Heart right ventricle (tissue), 16 donors: ENCODE measurements at regions of chr13 and their contacts with region 1.

Region 1: GRCh38 chr13:26460648-26461047 is 96.8 kb upstream of the WASF3 start:
- DNase-seq: peak; percentile 79 to 91
- ATAC-seq: peak; percentile 84 to 92 (median 88)
- H3K4me3 ChIP-seq: no peak overlapping the region
- H3K27ac ChIP-seq: peak overlapping the region in 8 of 10 donors; percentile 56 to 90 (median 76)
- H3K4me1 ChIP-seq: peaks cover 0 to 47% (median 0%) of the 10 kb centered on the region in 9 donors
- H3K27me3 ChIP-seq: no peaks in the 10 kb centered on the region
- CTCF ChIP-seq: no peak

Region 2: DNA sequence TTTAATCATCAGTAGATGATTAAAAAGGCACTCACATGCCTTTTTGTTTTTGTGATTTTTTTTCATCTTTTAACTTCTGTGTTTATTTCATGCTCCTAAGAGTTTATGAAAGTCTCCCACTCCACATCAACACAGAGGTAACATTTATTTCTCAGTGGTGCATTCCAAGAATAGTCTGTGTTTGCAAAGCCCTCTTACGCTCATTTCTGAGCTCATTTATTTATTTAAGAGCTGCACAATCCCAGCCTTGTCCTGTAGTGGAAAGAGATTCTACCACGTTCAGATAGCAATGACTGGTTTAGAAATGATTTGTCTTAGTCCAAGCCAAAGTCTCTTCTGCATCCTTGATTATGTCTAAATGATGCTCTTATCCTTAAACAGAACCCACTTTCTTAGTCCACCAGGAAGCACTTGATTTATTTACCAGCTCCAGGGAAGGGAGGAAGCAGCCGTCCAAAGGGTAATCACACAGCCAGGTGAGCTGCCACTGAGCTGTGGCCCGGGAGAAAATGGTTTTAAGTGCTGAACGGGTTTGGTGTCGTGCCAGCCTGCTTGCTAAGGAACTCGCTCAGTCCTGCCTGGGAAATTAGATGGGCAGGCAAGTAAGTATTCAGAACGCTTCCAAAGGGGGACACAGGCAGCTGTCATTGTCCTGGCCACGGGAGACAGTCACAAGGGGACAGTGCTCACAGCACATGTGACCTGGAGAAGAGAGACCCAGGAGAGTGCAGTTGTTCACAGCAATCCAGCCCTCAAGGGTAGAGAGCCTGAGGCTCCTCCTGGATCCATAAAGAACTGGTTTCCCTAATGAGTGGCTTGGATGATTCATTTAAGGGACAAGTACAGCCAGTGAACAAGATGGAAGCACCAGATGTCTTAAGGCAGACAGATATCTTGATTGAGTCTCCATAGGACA is 34.9 kb before region 1 on chr13:
- intact Hi-C with region 1: loop called in 1 of 10 experiments (anchors 2 kb)
- DNase-seq: peak in 1 of 2 donors; percentile 8
- ATAC-seq: peak in 7 of 8 donors; percentile 11 to 74 (median 67)
- H3K4me3 ChIP-seq: no peak overlapping the region
- H3K27ac ChIP-seq: peak overlapping the region in 6 of 10 donors; percentile 26 to 85 (median 66)
- H3K4me1 ChIP-seq: peaks cover 0 to 32% (median 6%) of the 10 kb centered on the region in 9 donors
- H3K27me3 ChIP-seq: peaks cover 0 to 6% (median 0%) of the 10 kb centered on the region in 7 donors
- CTCF ChIP-seq: no peak

Region 3: GRCh38 chr13:26476111-26476781 is 15.6 kb after region 1 on chr13:
- intact Hi-C with region 1: loop called in 1 of 10 experiments (anchors 1 kb)
- DNase-seq: peak in 1 of 2 donors; percentile 35
- ATAC-seq: peak; percentile 78 to 87 (median 82)
- H3K4me3 ChIP-seq: peak overlapping the region in 8 of 10 donors; percentile 13 to 49 (median 34)
- H3K27ac ChIP-seq: peak overlapping the region in 9 of 10 donors; percentile 59 to 93 (median 68)
- H3K4me1 ChIP-seq: peaks cover 0 to 28% (median 11%) of the 10 kb centered on the region in 9 donors
- H3K27me3 ChIP-seq: no peaks in the 10 kb centered on the region
- CTCF ChIP-seq: no peak

Region 4: GRCh38 chr13:26872525-26873385 is 412.1 kb after region 1 on chr13:
- intact Hi-C with region 1: no loop called
- DNase-seq: peak; percentile 40 to 60
- ATAC-seq: peak in 4 of 8 donors; percentile 46 to 69 (median 62)
- H3K4me3 ChIP-seq: no peak overlapping the region
- H3K27ac ChIP-seq: no peak overlapping the region
- H3K4me1 ChIP-seq: no peaks in the 10 kb centered on the region
- H3K27me3 ChIP-seq: peaks cover 0 to 40% (median 24%) of the 10 kb centered on the region in 7 donors
- CTCF ChIP-seq: peak; percentile 39 to 77 (median 71)